ENCODE measurements at regions of chr17 and their contacts with region 1.

Region 1: GRCh38 chr17:7136266-7136877 is 21.8 kb upstream of the ASGR2 start:
- DNase-seq: peak; percentile 84 to 93 (median 89)
- H3K4me3 ChIP-seq: no peak overlapping the region
- H3K27ac ChIP-seq: no peak overlapping the region
- H3K4me1 ChIP-seq: peaks cover 0 to 30% (median 26%) of the 10 kb centered on the region in 4 experiments
- H3K27me3 ChIP-seq: peaks cover 0 to 2% (median 0%) of the 10 kb centered on the region in 5 experiments

Region 2: GRCh38 chr17:7081341-7082062 is 54.9 kb before region 1 on chr17:
- CTCF ChIA-PET with region 1: interaction called, 22 read pairs
- POLR2A ChIA-PET with region 1: interaction called, 8 read pairs
- DNase-seq: peak; percentile 66 to 97 (median 96)
- H3K4me3 ChIP-seq: peak overlapping the region in 1 of 7 experiments; percentile 0
- H3K27ac ChIP-seq: no peak overlapping the region
- H3K4me1 ChIP-seq: peaks cover 3 to 43% (median 27%) of the 10 kb centered on the region in 4 experiments
- H3K27me3 ChIP-seq: peaks cover 0 to 8% (median 0%) of the 10 kb centered on the region in 5 experiments

Region 3: GRCh38 chr17:7111784-7112509 is 24.4 kb before region 1 on chr17:
- CTCF ChIA-PET with region 1: interaction called, 15 read pairs
- POLR2A ChIA-PET with region 1: no interaction called
- DNase-seq: peak in 2 of 3 donors; percentile 35 to 53
- H3K4me3 ChIP-seq: no peak overlapping the region
- H3K27ac ChIP-seq: no peak overlapping the region
- H3K4me1 ChIP-seq: peaks cover 0 to 43% (median 27%) of the 10 kb centered on the region in 4 experiments
- H3K27me3 ChIP-seq: no peaks in the 10 kb centered on the region

Region 4: DNA sequence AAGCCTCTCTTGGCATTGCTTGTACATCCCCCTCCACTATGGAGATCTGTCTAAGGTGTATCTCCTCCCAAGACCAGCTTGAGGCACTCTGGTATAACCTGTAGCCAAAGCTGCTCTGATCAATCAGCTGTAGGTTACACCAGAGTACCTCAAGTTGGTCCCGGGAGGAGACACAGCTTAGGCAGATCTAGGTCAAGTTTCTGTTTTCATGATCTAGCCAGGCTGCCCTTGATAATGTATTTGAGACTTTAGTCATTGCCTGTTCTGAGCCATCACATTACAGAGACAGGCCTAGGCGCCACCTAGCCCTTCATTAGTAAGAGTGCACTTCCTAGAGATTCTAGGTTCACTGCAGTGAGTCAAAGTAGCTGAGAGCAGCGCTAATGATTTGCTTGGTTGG is 11.4 kb after region 1 on chr17:
- CTCF ChIA-PET with region 1: interaction called, 15 read pairs
- POLR2A ChIA-PET with region 1: no interaction called
- DNase-seq: no peak
- H3K4me3 ChIP-seq: no peak overlapping the region
- H3K27ac ChIP-seq: no peak overlapping the region
- H3K4me1 ChIP-seq: no peaks in the 10 kb centered on the region
- H3K27me3 ChIP-seq: no peaks in the 10 kb centered on the region

Region 5: GRCh38 chr17:7177196-7177953 is 41.0 kb after region 1 on chr17:
- CTCF ChIA-PET with region 1: interaction called, 15 read pairs
- POLR2A ChIA-PET with region 1: no interaction called
- DNase-seq: peak; percentile 66 to 81 (median 80)
- H3K4me3 ChIP-seq: peak overlapping the region; percentile 24 to 90 (median 70)
- H3K27ac ChIP-seq: no peak overlapping the region
- H3K4me1 ChIP-seq: peaks cover 0 to 35% (median 28%) of the 10 kb centered on the region in 4 experiments
- H3K27me3 ChIP-seq: no peaks in the 10 kb centered on the region